CD4-positive, alpha-beta T cell (primary cell): ENCODE measurements at regions of chr19 and their contacts with region 1.

Region 1: GRCh38 chr19:32773126-32773525 is 53.6 kb downstream of the TDRD12 start:
- DNase-seq: no peak
- ATAC-seq: no peak
- H3K4me3 ChIP-seq: no peak overlapping the region
- H3K4me3 Mint-ChIP-seq: no peak overlapping the region
- H3K27ac ChIP-seq: no peak overlapping the region
- H3K27ac Mint-ChIP-seq: no peak overlapping the region
- H3K4me1 ChIP-seq: no peaks in the 10 kb centered on the region
- H3K4me1 Mint-ChIP-seq: no peaks in the 10 kb centered on the region
- H3K27me3 ChIP-seq: no peaks in the 10 kb centered on the region
- H3K27me3 Mint-ChIP-seq: peaks cover 5% of the 10 kb centered on the region
- CTCF ChIP-seq: no peak

Region 2: GRCh38 chr19:32599736-32600157 is 173.4 kb before region 1 on chr19:
- CTCF ChIA-PET with region 1: no interaction called
- POLR2A ChIA-PET with region 1: no interaction called
- intact Hi-C with region 1: no loop called
- DNase-seq: peak in 11 of 14 experiments; percentile 7 to 82 (median 33)
- ATAC-seq: peak; percentile 75
- H3K4me3 ChIP-seq: no peak overlapping the region
- H3K4me3 Mint-ChIP-seq: no peak overlapping the region
- H3K27ac ChIP-seq: no peak overlapping the region
- H3K27ac Mint-ChIP-seq: no peak overlapping the region
- H3K4me1 ChIP-seq: no peaks in the 10 kb centered on the region
- H3K4me1 Mint-ChIP-seq: peaks cover 6% of the 10 kb centered on the region
- H3K27me3 ChIP-seq: no peaks in the 10 kb centered on the region
- H3K27me3 Mint-ChIP-seq: no peaks in the 10 kb centered on the region
- CTCF ChIP-seq: peak; percentile 85

Region 3: DNA sequence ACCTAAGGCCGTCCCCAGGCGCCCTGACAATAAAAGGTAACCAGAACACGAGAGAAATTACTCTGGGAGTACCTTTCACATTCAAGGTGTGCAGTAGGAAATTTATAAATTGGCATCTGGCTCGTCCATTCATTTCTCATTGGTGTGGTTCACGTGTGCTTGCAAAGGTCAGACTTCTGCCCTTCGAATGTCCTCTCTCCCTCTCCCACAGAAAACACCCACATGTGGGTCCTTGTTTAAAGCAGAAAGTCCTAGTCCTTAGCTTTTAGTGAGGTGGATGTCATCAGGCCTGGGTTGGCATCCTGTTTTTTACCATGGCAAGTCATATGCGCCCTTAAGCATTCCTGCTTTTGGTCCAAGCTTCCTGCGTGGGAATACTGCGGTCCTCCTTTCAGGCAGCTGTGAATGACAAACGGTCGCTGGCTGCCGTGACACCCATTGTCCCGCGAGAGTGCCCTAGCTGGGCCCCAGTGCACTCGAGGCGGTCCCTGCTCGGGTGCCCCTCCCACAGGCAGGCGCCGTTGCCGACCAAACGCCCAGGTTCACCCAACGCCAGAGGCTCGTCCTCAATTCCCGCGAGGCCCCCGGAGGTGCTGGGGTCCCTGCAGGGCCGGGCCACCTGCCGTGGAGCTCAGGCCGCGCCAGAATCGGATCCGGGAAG is 81.7 kb before region 1 on chr19 and contains the start of gene NUDT19:
- CTCF ChIA-PET with region 1: no interaction called
- POLR2A ChIA-PET with region 1: no interaction called
- intact Hi-C with region 1: no loop called
- DNase-seq: peak; percentile 50 to 86 (median 72)
- ATAC-seq: peak; percentile 77
- H3K4me3 ChIP-seq: peak within 1 kb of the TSS; percentile 65
- H3K4me3 Mint-ChIP-seq: peak within 1 kb of the TSS; percentile 96
- H3K27ac ChIP-seq: peak within 1 kb of the TSS; percentile 31 to 55
- H3K27ac Mint-ChIP-seq: peak within 1 kb of the TSS; percentile 80
- H3K4me1 ChIP-seq: peaks cover 44% of the 10 kb centered on the region
- H3K4me1 Mint-ChIP-seq: peaks cover 51% of the 10 kb centered on the region
- H3K27me3 ChIP-seq: no peaks in the 10 kb centered on the region
- H3K27me3 Mint-ChIP-seq: no peaks in the 10 kb centered on the region
- CTCF ChIP-seq: no peak
- total RNA-seq, gene NUDT19: 7.9 to 8.2 TPM

Region 4: GRCh38 chr19:32824191-32824751 is 51.1 kb after region 1 on chr19:
- CTCF ChIA-PET with region 1: no interaction called
- POLR2A ChIA-PET with region 1: no interaction called
- intact Hi-C with region 1: loop called in 1 of 2 experiments (anchors 5 kb)
- DNase-seq: no peak
- ATAC-seq: no peak
- H3K4me3 ChIP-seq: no peak overlapping the region
- H3K4me3 Mint-ChIP-seq: no peak overlapping the region
- H3K27ac ChIP-seq: no peak overlapping the region
- H3K27ac Mint-ChIP-seq: no peak overlapping the region
- H3K4me1 ChIP-seq: peaks cover 12% of the 10 kb centered on the region
- H3K4me1 Mint-ChIP-seq: peaks cover 24% of the 10 kb centered on the region
- H3K27me3 ChIP-seq: no peaks in the 10 kb centered on the region
- H3K27me3 Mint-ChIP-seq: peaks cover 9% of the 10 kb centered on the region
- CTCF ChIP-seq: no peak

Region 5: DNA sequence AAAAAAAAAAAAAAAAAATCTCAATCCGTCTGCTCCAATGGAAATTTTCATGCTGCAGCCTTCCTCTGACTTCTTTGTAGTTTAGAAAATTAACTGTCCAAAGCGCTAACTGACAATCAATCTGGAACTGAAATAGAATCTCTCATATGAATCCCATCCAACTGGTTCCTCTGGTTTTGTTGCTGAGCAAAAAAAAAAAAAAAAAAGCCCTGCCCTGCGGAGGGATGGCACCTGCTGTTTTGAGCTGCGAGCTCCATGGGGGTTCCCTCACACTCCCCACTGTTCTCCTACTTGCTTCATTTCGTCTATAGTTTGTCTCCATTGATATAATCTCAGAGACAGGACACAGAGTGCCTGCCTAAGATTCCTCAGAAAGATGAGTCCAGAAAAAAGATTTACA is 232.3 kb after region 1 on chr19:
- CTCF ChIA-PET with region 1: no interaction called
- POLR2A ChIA-PET with region 1: no interaction called
- intact Hi-C with region 1: no loop called
- DNase-seq: no peak
- ATAC-seq: no peak
- H3K4me3 ChIP-seq: no peak overlapping the region
- H3K4me3 Mint-ChIP-seq: no peak overlapping the region
- H3K27ac ChIP-seq: no peak overlapping the region
- H3K27ac Mint-ChIP-seq: no peak overlapping the region
- H3K4me1 ChIP-seq: peaks cover 9% of the 10 kb centered on the region
- H3K4me1 Mint-ChIP-seq: peaks cover 6% of the 10 kb centered on the region
- H3K27me3 ChIP-seq: no peaks in the 10 kb centered on the region
- H3K27me3 Mint-ChIP-seq: no peaks in the 10 kb centered on the region
- CTCF ChIP-seq: no peak